ENCODE measurements at regions of chr1 and their contacts with region 1.

Region 1: GRCh38 chr1:29117381-29117780 is 6.3 kb downstream of the TMEM200B start:
- DNase-seq: peak in 1 of 5 donors; percentile 59
- H3K4me3 ChIP-seq: no peak overlapping the region
- H3K27ac ChIP-seq: peak overlapping the region; percentile 58 to 61
- H3K4me1 ChIP-seq: peaks cover 11% of the 10 kb centered on the region
- H3K27me3 ChIP-seq: no peaks in the 10 kb centered on the region
- CTCF ChIP-seq: peak; percentile 10 to 41 (median 16)
- EP300 ChIP-seq: no peak
- POLR2A ChIP-seq: no peak

Region 2: DNA sequence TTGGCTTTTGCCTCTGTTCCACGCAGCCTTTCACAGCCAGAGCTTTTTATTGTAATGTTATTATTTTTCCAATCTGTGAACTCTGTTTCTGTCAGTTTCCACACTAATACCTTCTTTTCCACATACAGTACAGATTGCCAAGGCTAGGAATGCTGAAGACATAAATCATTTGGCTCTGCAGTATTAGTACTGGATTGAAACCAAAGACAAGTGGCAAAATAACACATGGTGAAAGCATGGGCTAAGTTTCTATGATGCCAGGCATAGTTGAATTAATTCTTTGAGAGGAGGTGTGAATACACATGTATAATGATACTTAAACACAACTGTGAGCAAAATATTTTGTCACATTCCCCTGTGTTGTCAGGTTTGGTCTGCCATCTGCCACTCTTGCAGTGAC is 67.2 kb before region 1 on chr1:
- intact Hi-C with region 1: loop called in 1 of 4 experiments (anchors 10 kb)
- DNase-seq: no peak
- H3K4me3 ChIP-seq: no peak overlapping the region
- H3K27ac ChIP-seq: no peak overlapping the region
- H3K4me1 ChIP-seq: peaks cover 2% of the 10 kb centered on the region
- H3K27me3 ChIP-seq: no peaks in the 10 kb centered on the region
- CTCF ChIP-seq: no peak
- EP300 ChIP-seq: no peak
- POLR2A ChIP-seq: no peak